Aorta (tissue), 5 donors: ENCODE measurements at regions of chr6 and their contacts with region 1.

Region 1: DNA sequence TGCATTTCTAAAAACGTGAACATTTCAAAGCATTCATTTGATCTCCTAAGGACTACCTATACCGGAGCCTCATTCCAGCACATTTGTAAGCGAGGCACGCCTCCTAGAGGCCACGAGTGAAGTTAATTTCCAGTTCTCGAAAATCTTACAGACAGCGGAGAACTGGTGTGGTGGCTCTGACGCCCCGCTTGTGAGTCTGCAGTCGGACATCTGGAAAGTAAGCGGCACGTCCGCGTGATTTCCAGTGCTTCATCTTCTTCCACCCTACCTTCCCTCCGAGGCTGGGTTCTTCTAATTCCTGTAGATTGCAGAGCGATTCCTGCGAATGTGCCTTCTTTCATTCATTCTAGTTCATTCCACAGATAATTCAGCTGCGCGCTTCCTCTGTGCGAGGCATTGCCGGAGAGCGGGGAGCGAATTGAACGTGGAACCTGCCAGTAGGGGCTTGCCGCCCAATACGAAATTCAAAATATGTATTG is 810 bp upstream of the PRIM2 start:
- DNase-seq: peak; percentile 87 to 92
- ATAC-seq: peak; percentile 95
- H3K4me3 ChIP-seq: peak overlapping the region; percentile 74 to 84
- H3K27ac ChIP-seq: no peak overlapping the region
- H3K4me1 ChIP-seq: no peaks in the 10 kb centered on the region
- H3K27me3 ChIP-seq: no peaks in the 10 kb centered on the region

Region 2: GRCh38 chr6:56955171-56956045 is 361.2 kb before region 1 on chr6:
- intact Hi-C with region 1: loop called in 1 of 2 experiments (anchors 5 kb)
- DNase-seq: peak; percentile 90 to 95
- ATAC-seq: peak; percentile 70
- H3K4me3 ChIP-seq: peak overlapping the region; percentile 85
- H3K27ac ChIP-seq: no peak overlapping the region
- H3K4me1 ChIP-seq: no peaks in the 10 kb centered on the region
- H3K27me3 ChIP-seq: no peaks in the 10 kb centered on the region

Region 3: DNA sequence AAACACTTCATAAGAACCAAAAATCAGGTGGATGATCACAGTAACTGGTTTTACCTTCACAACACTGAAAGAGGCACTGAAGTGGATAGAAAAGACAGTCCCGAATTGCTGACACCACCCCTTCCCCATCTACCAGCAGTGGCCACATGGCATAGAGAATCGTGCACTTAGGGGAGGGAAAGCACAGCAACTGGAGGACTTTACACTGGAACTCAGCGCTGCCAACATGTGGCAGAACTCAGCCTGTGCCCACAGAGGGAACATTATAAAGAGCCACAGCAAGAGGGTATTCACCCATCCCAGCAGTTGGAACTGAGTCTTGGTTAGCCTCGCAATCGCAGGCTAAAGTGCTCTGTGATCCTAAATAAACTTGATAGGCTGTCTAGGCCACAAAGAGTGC is 276.6 kb before region 1 on chr6:
- intact Hi-C with region 1: loop called in 1 of 2 experiments (anchors 10 kb)
- DNase-seq: no peak
- ATAC-seq: no peak
- H3K4me3 ChIP-seq: no peak overlapping the region
- H3K27ac ChIP-seq: no peak overlapping the region
- H3K4me1 ChIP-seq: no peaks in the 10 kb centered on the region
- H3K27me3 ChIP-seq: no peaks in the 10 kb centered on the region

Region 4: DNA sequence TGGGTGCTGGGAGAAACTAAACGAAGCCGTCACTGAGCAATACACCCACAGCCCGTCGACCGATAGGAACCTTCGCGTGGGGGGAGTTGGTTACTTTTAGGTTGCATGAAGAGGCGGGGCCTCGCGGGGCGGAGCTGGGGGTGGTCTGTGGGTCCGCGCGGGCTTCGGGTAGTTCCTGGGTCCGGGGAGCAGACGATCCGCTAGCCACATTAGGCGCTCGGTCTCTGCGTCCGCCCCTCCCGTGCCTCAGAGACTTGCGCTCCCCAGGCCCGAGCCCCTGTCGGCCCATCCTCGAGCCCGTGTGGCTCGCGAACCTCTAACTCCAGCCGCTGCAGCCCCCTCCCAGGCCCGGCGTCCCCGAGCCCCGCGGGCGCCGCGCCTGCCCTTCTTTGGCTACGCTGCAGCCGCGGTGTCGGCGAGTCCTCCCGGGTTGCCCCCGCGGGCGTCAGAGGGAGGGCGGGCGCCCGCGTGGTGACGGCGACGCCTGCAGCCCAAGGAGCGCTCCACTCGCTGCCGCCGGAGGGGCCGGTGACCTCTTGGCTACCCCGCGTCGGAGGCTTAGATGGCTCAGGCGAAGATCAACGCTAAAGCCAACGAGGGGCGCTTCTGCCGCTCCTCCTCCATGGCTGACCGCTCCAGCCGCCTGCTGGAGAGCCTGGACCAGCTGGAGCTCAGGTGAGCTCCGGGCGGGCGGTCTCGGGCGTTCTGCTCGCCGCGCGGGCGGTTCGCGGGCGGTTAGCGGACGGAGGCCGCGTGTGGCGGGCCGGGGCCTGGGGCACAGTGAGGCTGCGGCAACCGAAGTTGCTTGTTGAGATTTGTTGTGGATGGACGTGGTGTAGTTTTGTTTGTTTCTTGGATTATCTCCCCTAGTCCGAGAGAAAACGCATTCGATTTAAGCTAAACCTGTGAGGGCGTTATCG is 144.2 kb before region 1 on chr6 and contains the start of gene BAG2:
- intact Hi-C with region 1: loop called (anchors 2 kb)
- DNase-seq: peak; percentile 94 to 97
- ATAC-seq: peak; percentile 94
- H3K4me3 ChIP-seq: peak within 1 kb of the TSS; percentile 83 to 98
- H3K27ac ChIP-seq: peak within 1 kb of the TSS; percentile 64 to 88
- H3K4me1 ChIP-seq: peaks cover 0 to 4% of the 10 kb centered on the region in 2 donors
- H3K27me3 ChIP-seq: no peaks in the 10 kb centered on the region
- total RNA-seq, gene BAG2: 18.8 to 32.9 TPM

Region 5: GRCh38 chr6:57221936-57222742 is 94.5 kb before region 1 on chr6 and contains the start of gene RAB23:
- intact Hi-C with region 1: loop called in 1 of 2 experiments (anchors 10 kb)
- DNase-seq: peak; percentile 89 to 94
- ATAC-seq: peak; percentile 97
- H3K4me3 ChIP-seq: peak within 1 kb of the TSS; percentile 85 to 94
- H3K27ac ChIP-seq: peak within 1 kb of the TSS; percentile 58 to 93
- H3K4me1 ChIP-seq: no peaks in the 10 kb centered on the region
- H3K27me3 ChIP-seq: no peaks in the 10 kb centered on the region
- total RNA-seq, gene RAB23: 55.9 to 59.2 TPM